AG04450 (cell line): ENCODE measurements at regions of chr6 and their contacts with region 1.

Region 1: GRCh38 chr6:146700078-146700686 is 101.4 kb downstream of the ADGB start:
- DNase-seq: peak; percentile 69
- H3K4me3 ChIP-seq: no peak overlapping the region
- H3K27ac ChIP-seq: no peak overlapping the region
- H3K27me3 ChIP-seq: no peaks in the 10 kb centered on the region
- CTCF ChIP-seq: peak; percentile 74

Region 2: DNA sequence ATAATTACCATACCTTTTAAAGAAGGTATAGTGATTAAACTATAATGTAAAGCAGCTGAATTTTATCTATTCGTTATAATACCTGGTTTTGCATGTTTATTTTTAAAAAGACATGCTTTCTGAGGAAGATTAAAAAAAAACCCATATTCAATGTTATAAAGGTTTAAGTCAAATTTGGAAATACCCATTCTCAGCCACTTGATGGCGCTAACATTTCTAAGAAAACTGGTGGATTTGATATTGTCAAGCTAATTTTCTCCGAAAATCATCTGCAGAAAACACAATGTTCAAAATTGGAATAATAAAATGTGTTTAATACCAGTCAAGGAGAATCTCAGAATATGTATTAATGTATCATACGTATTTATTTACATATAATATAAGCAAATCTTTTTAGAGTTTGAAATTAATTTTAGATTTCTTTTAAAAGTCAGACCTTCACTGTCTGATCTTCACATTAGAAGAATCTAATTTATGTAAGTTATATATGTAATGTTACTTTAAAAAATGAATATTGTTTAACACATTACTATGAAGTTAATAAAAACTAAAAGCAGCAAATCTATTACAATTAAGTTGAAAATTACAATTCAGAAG is 771.0 kb before region 1 on chr6:
- CTCF ChIA-PET with region 1: interaction called, 10 read pairs
- POLR2A ChIA-PET with region 1: no interaction called
- DNase-seq: peak; percentile 13
- H3K4me3 ChIP-seq: no peak overlapping the region
- H3K27ac ChIP-seq: no peak overlapping the region
- H3K27me3 ChIP-seq: no peaks in the 10 kb centered on the region
- CTCF ChIP-seq: peak; percentile 73

Region 3: GRCh38 chr6:146041282-146041681 is 658.9 kb before region 1 on chr6:
- CTCF ChIA-PET with region 1: interaction called, 12 read pairs
- POLR2A ChIA-PET with region 1: no interaction called
- DNase-seq: no peak
- H3K4me3 ChIP-seq: no peak overlapping the region
- H3K27ac ChIP-seq: no peak overlapping the region
- H3K27me3 ChIP-seq: no peaks in the 10 kb centered on the region
- CTCF ChIP-seq: peak; percentile 12; the same call in 1 of the 2 replicates

Region 4: GRCh38 chr6:146277142-146277541 is 423.0 kb before region 1 on chr6:
- CTCF ChIA-PET with region 1: no interaction called
- POLR2A ChIA-PET with region 1: no interaction called
- DNase-seq: no peak
- H3K4me3 ChIP-seq: no peak overlapping the region
- H3K27ac ChIP-seq: no peak overlapping the region
- H3K27me3 ChIP-seq: no peaks in the 10 kb centered on the region
- CTCF ChIP-seq: no peak

Region 5: GRCh38 chr6:146397641-146398040 is 302.5 kb before region 1 on chr6:
- CTCF ChIA-PET with region 1: no interaction called
- POLR2A ChIA-PET with region 1: interaction called, 11 read pairs
- DNase-seq: no peak
- H3K4me3 ChIP-seq: no peak overlapping the region
- H3K27ac ChIP-seq: no peak overlapping the region
- H3K27me3 ChIP-seq: no peaks in the 10 kb centered on the region
- CTCF ChIP-seq: no peak

Region 6: GRCh38 chr6:146870760-146871159 is 170.6 kb after region 1 on chr6:
- CTCF ChIA-PET with region 1: no interaction called
- POLR2A ChIA-PET with region 1: no interaction called
- DNase-seq: no peak
- H3K4me3 ChIP-seq: no peak overlapping the region
- H3K27ac ChIP-seq: no peak overlapping the region
- H3K27me3 ChIP-seq: no peaks in the 10 kb centered on the region
- CTCF ChIP-seq: no peak

Region 7: GRCh38 chr6:146974351-146974750 is 274.2 kb after region 1 on chr6:
- CTCF ChIA-PET with region 1: no interaction called
- POLR2A ChIA-PET with region 1: no interaction called
- DNase-seq: no peak
- H3K4me3 ChIP-seq: no peak overlapping the region
- H3K27ac ChIP-seq: no peak overlapping the region
- H3K27me3 ChIP-seq: no peaks in the 10 kb centered on the region
- CTCF ChIP-seq: no peak